Activated CD4-positive, alpha-beta memory T cell treated with anti-CD3 and anti-CD28 coated beads for 36 hours (primary cell): ENCODE measurements at regions of chr9 and their contacts with region 1.

Region 1: GRCh38 chr9:130023144-130023787 is 19.7 kb downstream of the FNBP1 start:
- DNase-seq: no peak
- H3K4me3 Mint-ChIP-seq: peak overlapping the region; percentile 51
- H3K27ac Mint-ChIP-seq: peak overlapping the region; percentile 96
- H3K4me1 Mint-ChIP-seq: peaks cover 93% of the 10 kb centered on the region
- H3K27me3 Mint-ChIP-seq: no peaks in the 10 kb centered on the region

Region 2: DNA sequence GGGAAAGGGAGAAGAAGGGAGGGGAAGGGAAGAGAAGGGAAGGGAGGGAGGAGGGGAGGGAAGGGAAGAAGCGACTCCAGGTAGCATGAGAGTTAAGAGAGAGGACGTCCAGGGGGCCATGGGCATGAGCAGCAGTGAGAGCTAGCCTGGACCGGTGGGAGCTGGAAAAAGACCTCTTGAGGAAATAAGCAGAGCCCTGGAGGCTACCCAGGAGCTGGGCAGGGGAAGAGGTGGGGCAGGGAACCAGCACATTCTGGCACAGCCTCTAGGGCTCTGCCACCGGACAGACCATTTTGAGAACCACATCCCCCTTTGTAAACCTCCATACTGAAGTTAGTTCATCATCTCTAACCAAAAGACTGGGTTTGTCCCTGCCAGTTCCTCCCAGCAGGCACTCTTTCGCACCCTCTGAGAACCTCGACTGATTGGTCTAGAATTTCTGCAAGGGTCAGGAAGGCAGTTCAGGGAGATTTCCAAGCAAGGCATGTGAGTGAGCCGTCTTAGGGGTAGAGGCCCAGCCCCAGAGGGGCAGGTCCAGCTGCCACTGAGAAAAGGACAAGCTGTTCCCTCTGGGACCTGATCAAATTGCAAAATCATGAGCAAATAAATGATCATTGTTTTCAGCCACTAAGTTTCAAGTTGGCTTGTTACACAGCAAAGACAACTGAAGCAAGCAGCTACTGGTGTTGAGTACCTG is 1967.8 kb before region 1 on chr9:
- CTCF ChIA-PET with region 1: no interaction called
- POLR2A ChIA-PET with region 1: no interaction called
- intact Hi-C with region 1: no loop called
- DNase-seq: no peak
- H3K4me3 Mint-ChIP-seq: no peak overlapping the region
- H3K27ac Mint-ChIP-seq: no peak overlapping the region
- H3K4me1 Mint-ChIP-seq: no peaks in the 10 kb centered on the region
- H3K27me3 Mint-ChIP-seq: no peaks in the 10 kb centered on the region

Region 3: GRCh38 chr9:129981180-129981907 is 41.9 kb before region 1 on chr9:
- CTCF ChIA-PET with region 1: no interaction called
- POLR2A ChIA-PET with region 1: no interaction called
- intact Hi-C with region 1: no loop called
- DNase-seq: no peak
- H3K4me3 Mint-ChIP-seq: no peak overlapping the region
- H3K27ac Mint-ChIP-seq: peak overlapping the region; percentile 69
- H3K4me1 Mint-ChIP-seq: peaks cover 46% of the 10 kb centered on the region
- H3K27me3 Mint-ChIP-seq: no peaks in the 10 kb centered on the region

Region 4: GRCh38 chr9:130010151-130010988 is 12.9 kb before region 1 on chr9:
- CTCF ChIA-PET with region 1: interaction called, 5 read pairs
- POLR2A ChIA-PET with region 1: interaction called, 9 read pairs
- intact Hi-C with region 1: loop called (anchors 1 kb)
- DNase-seq: peak; percentile 71
- H3K4me3 Mint-ChIP-seq: peak overlapping the region; percentile 61
- H3K27ac Mint-ChIP-seq: peak overlapping the region; percentile 93
- H3K4me1 Mint-ChIP-seq: peaks cover 84% of the 10 kb centered on the region
- H3K27me3 Mint-ChIP-seq: no peaks in the 10 kb centered on the region

Region 5: DNA sequence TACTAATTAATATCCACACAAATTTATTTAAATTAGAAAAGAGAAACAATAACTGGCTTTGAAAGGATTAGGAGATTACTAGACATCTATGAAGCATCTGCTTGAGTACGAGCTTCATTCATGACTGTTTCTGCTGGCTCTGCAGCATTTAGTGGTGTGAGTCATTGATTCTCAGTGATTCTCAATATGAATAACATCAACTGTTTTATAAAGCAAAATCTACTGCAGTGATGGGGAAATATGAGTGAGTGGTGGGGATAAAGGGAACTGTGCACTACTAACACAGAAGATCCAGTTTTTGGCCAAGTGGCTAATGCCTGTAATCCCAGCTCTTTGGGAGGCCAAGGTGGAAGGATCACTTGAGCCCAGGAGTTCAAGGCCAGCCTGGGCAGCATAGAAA is 11.3 kb after region 1 on chr9:
- CTCF ChIA-PET with region 1: interaction called, 18 read pairs
- POLR2A ChIA-PET with region 1: interaction called, 88 read pairs
- intact Hi-C with region 1: loop called (anchors 1 kb)
- DNase-seq: peak; percentile 54
- H3K4me3 Mint-ChIP-seq: peak overlapping the region; percentile 49
- H3K27ac Mint-ChIP-seq: peak overlapping the region; percentile 96
- H3K4me1 Mint-ChIP-seq: peaks cover 81% of the 10 kb centered on the region
- H3K27me3 Mint-ChIP-seq: no peaks in the 10 kb centered on the region

Region 6: GRCh38 chr9:130058887-130059286 is 35.6 kb after region 1 on chr9:
- CTCF ChIA-PET with region 1: no interaction called
- POLR2A ChIA-PET with region 1: no interaction called
- intact Hi-C with region 1: no loop called
- DNase-seq: no peak
- H3K4me3 Mint-ChIP-seq: no peak overlapping the region
- H3K27ac Mint-ChIP-seq: no peak overlapping the region
- H3K4me1 Mint-ChIP-seq: peaks cover 24% of the 10 kb centered on the region
- H3K27me3 Mint-ChIP-seq: no peaks in the 10 kb centered on the region

Region 7: DNA sequence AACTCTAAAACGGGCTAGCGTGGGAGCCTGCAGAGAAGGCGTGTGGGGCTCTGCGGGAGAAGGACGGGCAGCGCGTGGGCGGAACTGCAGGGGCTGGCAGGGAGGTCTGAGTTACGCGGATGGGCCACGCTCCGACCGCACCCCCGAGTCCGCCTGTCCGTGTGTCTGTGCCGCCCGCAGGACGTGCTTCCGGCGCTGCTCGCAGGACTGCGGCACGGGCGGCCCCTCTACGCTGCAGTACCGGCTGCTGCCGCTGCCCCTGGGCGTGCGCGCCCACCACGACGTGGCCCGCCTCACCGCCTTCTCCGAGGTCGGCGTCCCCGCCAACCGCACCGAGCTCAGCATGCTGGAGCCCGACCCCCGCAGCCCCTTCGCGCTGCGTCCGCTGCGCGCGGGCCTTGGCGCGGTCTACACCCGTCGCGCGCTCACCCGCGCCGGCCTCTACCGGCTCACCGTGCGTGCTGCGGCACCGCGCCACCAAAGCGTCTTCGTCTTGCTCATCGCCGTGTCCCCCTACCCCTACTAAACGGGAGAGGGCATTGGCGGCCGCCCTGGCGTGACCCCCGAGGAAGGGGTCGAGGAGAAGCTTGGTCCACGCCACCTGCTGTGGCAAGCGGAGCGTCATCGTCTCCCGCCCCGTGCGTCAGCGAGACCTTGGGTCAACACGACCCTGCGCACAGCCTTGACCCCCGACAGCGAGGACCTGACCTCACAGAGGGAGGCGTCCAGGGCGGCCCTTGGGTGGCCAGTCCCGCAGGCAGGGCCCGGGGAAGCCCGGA is 410.1 kb after region 1 on chr9:
- CTCF ChIA-PET with region 1: no interaction called
- POLR2A ChIA-PET with region 1: no interaction called
- intact Hi-C with region 1: no loop called
- DNase-seq: peak; percentile 43
- H3K4me3 Mint-ChIP-seq: no peak overlapping the region
- H3K27ac Mint-ChIP-seq: no peak overlapping the region
- H3K4me1 Mint-ChIP-seq: peaks cover 3% of the 10 kb centered on the region
- H3K27me3 Mint-ChIP-seq: peaks cover 34% of the 10 kb centered on the region